Sigmoid colon (tissue), 7 donors: ENCODE measurements at regions of chr11 and their contacts with region 1.

Region 1: DNA sequence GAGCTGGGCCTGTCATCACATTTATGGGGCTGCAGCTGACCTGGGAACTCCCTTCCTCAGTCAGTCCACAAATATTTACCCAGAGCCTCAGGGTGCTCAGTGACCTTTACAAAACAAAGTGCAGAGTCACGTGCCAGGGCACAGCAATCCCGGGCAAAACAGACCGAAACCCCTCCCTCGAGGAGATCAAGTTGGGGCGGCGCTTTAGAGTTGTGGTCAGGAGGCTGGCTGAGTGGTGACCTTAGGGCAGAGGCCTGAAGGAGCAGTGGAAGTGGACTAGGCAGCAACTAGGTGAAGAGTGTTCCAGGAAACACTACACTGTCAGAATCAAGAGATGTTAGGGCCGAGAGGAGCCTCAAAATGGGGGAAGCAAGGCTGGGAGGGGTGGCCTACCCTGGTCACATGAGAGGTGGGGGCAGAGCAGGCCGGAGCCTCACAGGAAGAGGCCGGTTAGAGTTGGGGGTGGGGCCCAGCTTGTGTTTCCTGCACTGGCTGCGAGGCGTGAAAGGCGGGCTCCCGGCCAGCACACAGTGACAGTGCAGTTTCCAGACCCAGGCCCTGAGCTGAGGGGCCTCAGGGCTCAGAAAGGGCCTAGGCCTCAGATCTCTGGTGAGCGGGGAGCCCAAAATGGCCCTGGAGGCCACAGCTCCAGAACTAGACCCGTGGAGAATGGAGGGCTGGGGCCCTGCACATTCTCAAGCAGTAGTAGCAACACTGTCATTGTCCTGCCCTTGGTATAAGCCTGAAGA is 3.7 kb upstream of the NEAT1 start:
- DNase-seq: peak; percentile 99
- H3K4me3 ChIP-seq: peak overlapping the region; percentile 27 to 88 (median 55)
- H3K27ac ChIP-seq: peak overlapping the region; percentile 97 to 100 (median 100)
- H3K4me1 ChIP-seq: peaks cover 0 to 63% (median 60%) of the 10 kb centered on the region in 4 donors
- H3K27me3 ChIP-seq: no peaks in the 10 kb centered on the region
- CTCF ChIP-seq: no peak
- EP300 ChIP-seq: peak; percentile 7 to 95 (median 50)
- POLR2A ChIP-seq: peak; percentile 56 to 78

Region 2: GRCh38 chr11:64810271-64810890 is 608.5 kb before region 1 on chr11 and contains the start of gene MEN1:
- intact Hi-C with region 1: no loop called
- DNase-seq: peak; percentile 98
- H3K4me3 ChIP-seq: peak within 1 kb of the TSS; percentile 60 to 97 (median 89)
- H3K27ac ChIP-seq: peak within 1 kb of the TSS; percentile 79 to 82 (median 82)
- H3K4me1 ChIP-seq: peaks cover 0 to 20% (median 16%) of the 10 kb centered on the region in 4 donors
- H3K27me3 ChIP-seq: no peaks in the 10 kb centered on the region
- CTCF ChIP-seq: no peak
- EP300 ChIP-seq: peak in 1 of 4 donors; percentile 5
- POLR2A ChIP-seq: peak; percentile 52 to 73
- total RNA-seq, gene MEN1: 6.8 to 12.7 (median 8.8) TPM

Region 3: GRCh38 chr11:65382033-65382807 is 36.7 kb before region 1 on chr11 and contains the start of gene SLC25A45:
- intact Hi-C with region 1: loop called (anchors 1 kb)
- DNase-seq: peak; percentile 98
- H3K4me3 ChIP-seq: peak within 1 kb of the TSS; percentile 27 to 52 (median 46)
- H3K27ac ChIP-seq: peak within 1 kb of the TSS; percentile 95 to 99 (median 96)
- H3K4me1 ChIP-seq: peaks cover 0 to 59% (median 48%) of the 10 kb centered on the region in 4 donors
- H3K27me3 ChIP-seq: no peaks in the 10 kb centered on the region
- CTCF ChIP-seq: peak; percentile 90 to 98 (median 95)
- EP300 ChIP-seq: peak in 2 of 4 donors; percentile 45 to 68
- POLR2A ChIP-seq: peak; percentile 46 to 63
- total RNA-seq, gene SLC25A45: 2.5 to 8.9 (median 6.0) TPM

Region 4: GRCh38 chr11:65471410-65471762 is 52.5 kb after region 1 on chr11:
- intact Hi-C with region 1: loop called (anchors 1 kb)
- DNase-seq: peak; percentile 95
- H3K4me3 ChIP-seq: peak overlapping the region; percentile 18 to 37 (median 24)
- H3K27ac ChIP-seq: peak overlapping the region; percentile 92 to 100 (median 96)
- H3K4me1 ChIP-seq: peaks cover 0 to 47% (median 32%) of the 10 kb centered on the region in 4 donors
- H3K27me3 ChIP-seq: no peaks in the 10 kb centered on the region
- CTCF ChIP-seq: peak in 3 of 4 experiments; percentile 53 to 59 (median 56)
- EP300 ChIP-seq: peak in 2 of 4 donors; percentile 43 to 88
- POLR2A ChIP-seq: no peak

Region 5: DNA sequence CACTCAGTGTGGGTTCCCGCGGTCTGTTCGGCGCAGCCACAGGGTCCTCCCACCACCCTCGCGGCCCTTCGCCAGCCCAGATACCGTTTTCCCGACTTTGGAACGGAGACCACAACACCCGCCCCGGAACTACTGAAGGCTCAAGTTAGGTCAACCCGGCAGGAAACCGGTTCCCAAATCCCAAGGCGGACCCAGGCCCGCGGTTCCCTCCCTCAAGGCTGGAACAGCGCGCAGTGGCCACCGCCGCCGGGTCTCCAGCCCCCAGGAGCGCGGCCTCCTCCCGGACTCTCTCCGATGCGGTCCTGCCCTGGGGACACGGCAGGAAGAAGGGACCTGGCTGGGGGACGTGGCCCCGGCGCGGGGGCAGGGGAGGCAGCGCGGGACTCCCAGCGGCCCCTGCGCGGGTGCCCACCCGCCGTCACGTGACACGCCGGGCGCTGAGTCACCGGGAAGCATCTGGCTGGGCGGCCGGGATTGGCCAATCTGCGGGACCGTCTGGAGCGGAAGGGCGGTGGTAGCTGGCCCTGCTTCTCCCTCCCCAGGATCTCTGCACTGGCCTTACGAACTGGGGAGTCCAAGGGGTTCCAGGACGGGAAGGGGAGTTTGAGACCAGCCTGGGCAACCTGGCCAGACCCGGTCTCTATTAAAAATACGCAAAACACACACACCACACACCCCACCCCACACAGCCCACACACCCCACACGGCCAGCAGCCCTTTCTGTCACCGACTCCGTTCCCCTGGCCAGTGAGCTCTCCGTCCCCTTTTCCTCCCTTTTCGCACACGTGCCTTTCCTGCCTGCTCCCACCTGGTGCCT is 58.5 kb after region 1 on chr11:
- intact Hi-C with region 1: loop called (anchors 1 kb)
- DNase-seq: peak; percentile 99
- H3K4me3 ChIP-seq: peak overlapping the region; percentile 74 to 91 (median 80)
- H3K27ac ChIP-seq: peak overlapping the region; percentile 92 to 100 (median 97)
- H3K4me1 ChIP-seq: peaks cover 0 to 72% (median 66%) of the 10 kb centered on the region in 4 donors
- H3K27me3 ChIP-seq: no peaks in the 10 kb centered on the region
- CTCF ChIP-seq: no peak
- EP300 ChIP-seq: peak in 2 of 4 donors; percentile 51 to 93
- POLR2A ChIP-seq: peak; percentile 90 to 96

Region 6: GRCh38 chr11:65497141-65498041 is 78.5 kb after region 1 on chr11:
- intact Hi-C with region 1: loop called (anchors 1 kb)
- DNase-seq: peak; percentile 100
- H3K4me3 ChIP-seq: peak overlapping the region; percentile 73 to 92 (median 84)
- H3K27ac ChIP-seq: peak overlapping the region; percentile 92 to 100 (median 97)
- H3K4me1 ChIP-seq: peaks cover 3 to 48% (median 47%) of the 10 kb centered on the region in 4 donors
- H3K27me3 ChIP-seq: no peaks in the 10 kb centered on the region
- CTCF ChIP-seq: no peak
- EP300 ChIP-seq: peak; percentile 90 to 100 (median 95)
- POLR2A ChIP-seq: peak; percentile 82 to 87

Region 7: GRCh38 chr11:65506770-65507505 is 88.1 kb after region 1 on chr11:
- intact Hi-C with region 1: loop called (anchors 1 kb)
- DNase-seq: peak; percentile 85
- H3K4me3 ChIP-seq: peak overlapping the region; percentile 22 to 92 (median 52)
- H3K27ac ChIP-seq: peak overlapping the region; percentile 92 to 100 (median 97)
- H3K4me1 ChIP-seq: peaks cover 0 to 44% (median 36%) of the 10 kb centered on the region in 4 donors
- H3K27me3 ChIP-seq: no peaks in the 10 kb centered on the region
- CTCF ChIP-seq: no peak
- EP300 ChIP-seq: no peak
- POLR2A ChIP-seq: peak in 1 of 2 donors; percentile 27

Region 8: DNA sequence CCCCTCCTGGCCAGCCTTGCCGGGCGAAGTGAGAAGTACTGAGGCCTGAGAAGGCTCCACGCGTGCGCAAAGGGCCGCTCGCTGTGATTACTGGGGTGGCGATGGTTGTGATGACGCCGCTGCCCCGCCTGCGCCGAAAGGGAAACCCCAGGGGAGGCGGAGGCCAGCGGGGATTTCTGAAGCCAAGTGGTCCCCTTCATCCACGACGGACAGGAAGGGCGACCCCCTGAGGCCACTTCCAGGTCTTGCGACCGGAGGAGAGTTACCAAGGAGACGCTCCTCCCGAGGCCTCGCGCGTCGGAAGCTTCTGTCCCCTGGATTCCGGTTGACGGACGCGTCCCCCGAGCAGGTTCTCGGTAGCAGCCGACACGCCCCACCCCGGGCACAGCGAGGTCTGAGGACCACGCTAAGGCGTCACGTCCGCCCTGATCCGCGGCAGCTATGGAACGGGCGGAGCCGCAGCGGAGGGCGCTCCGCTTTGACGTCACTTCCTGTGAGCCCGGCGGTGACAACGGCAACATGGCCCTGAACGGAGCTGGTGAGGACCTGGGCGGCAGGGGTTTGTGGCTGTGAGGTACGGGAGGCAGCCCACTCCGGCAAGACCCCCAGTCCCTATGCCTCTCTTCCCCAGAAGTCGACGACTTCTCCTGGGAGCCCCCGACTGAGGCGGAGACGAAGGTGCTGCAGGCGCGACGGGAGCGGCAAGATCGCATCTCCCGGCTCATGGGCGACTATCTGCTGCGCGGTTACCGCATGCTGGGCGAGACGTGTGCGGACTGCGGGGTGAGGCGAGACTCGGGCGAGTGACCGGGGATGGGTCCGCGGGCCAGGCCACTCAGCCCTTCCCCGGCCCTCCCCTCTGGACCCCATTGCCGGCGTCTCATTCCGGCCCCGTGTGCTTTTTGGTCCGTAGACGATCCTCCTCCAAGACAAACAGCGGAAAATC is 151.4 kb after region 1 on chr11 and contains the start of gene ZNRD2:
- intact Hi-C with region 1: loop called (anchors 5 kb)
- DNase-seq: peak; percentile 100
- H3K4me3 ChIP-seq: peak within 1 kb of the TSS; percentile 66 to 87 (median 74)
- H3K27ac ChIP-seq: peak within 1 kb of the TSS; percentile 91 to 98 (median 98)
- H3K4me1 ChIP-seq: peaks cover 0 to 75% (median 58%) of the 10 kb centered on the region in 4 donors
- H3K27me3 ChIP-seq: no peaks in the 10 kb centered on the region
- CTCF ChIP-seq: peak in 1 of 4 experiments; percentile 30
- EP300 ChIP-seq: peak in 2 of 4 donors; percentile 67 to 72
- POLR2A ChIP-seq: peak; percentile 48 to 78
- total RNA-seq, gene ZNRD2: 24.9 to 61.0 (median 58.5) TPM